ENCODE measurements at regions of chr4 and their contacts with region 1.

Region 1: DNA sequence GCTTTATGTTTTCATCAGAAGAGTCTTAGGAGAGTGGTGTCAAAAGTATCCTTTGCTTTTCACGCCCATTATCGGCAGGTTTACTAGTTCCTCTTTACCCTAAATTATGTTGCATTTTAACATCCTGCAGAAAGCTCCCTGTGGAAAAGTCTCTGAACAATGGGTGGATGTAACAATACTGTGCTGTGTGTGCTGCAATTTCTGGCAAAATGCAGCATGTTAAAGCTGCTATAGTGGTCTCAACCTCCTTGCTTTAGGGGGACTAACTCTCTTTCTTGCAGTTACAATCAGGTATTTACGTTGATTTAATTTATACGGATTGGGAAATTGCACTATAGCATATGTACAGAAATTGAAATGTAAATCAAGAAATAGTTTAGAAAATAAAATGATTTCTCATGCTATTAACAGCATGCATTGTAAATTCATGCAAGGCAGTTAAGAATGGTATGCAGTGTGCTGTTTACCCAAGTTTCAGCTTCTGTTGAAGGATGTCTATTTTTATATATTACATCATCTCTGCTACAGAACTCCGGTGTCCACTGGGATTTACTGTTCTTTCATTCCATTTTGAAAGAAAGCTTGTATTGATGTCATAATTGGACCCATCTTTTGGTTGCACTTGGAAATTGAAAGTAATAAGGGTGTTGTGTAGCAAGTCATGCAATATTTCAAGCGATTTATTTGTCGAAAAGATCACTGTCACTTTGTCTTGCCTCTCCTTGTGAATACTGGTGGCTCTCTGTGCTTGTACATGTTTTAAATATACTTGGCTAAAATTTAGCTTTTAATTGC is 145.7 kb downstream of the RAPGEF2 start:
- DNase-seq: peak; percentile 47
- ATAC-seq: peak; percentile 56; the same call in 1 of the 3 replicates
- H3K4me3 ChIP-seq: no peak overlapping the region
- H3K27ac ChIP-seq: no peak overlapping the region
- H3K4me1 ChIP-seq: peaks cover 10% of the 10 kb centered on the region
- H3K27me3 ChIP-seq: no peaks in the 10 kb centered on the region
- CTCF ChIP-seq: no peak
- EP300 ChIP-seq: no peak
- POLR2A ChIP-seq: no peak
- RAD21 ChIP-seq: no peak

Region 2: DNA sequence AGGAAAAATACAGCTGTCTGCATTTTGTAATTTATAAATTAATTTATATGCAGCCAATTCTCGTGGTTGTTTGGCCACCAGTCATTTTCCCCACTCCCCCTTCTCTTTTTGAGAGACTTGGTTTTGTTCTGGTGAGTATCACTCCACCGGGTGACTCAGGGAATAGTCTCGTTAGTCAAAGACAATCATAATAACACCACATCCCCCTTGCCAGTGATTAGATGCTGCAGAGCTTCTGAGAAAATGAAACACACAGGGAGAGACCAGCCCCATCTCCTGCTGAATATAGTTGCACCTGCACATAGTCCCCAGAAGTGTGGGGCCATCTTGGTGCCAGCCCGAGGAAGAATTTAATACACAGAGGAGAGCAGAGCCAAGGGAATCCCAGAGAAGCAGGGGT is 487.7 kb before region 1 on chr4:
- CTCF ChIA-PET with region 1: no interaction called
- POLR2A ChIA-PET with region 1: no interaction called
- in situ Hi-C with region 1: no loop called
- intact Hi-C with region 1: no loop called
- DNase-seq: no peak
- ATAC-seq: no peak
- H3K4me3 ChIP-seq: no peak overlapping the region
- H3K27ac ChIP-seq: no peak overlapping the region
- H3K4me1 ChIP-seq: peaks cover 32% of the 10 kb centered on the region
- H3K27me3 ChIP-seq: no peaks in the 10 kb centered on the region
- CTCF ChIP-seq: no peak
- EP300 ChIP-seq: no peak
- POLR2A ChIP-seq: no peak
- RAD21 ChIP-seq: no peak

Region 3: GRCh38 chr4:159312236-159312635 is 63.7 kb after region 1 on chr4:
- CTCF ChIA-PET with region 1: no interaction called
- POLR2A ChIA-PET with region 1: no interaction called
- in situ Hi-C with region 1: no loop called
- intact Hi-C with region 1: loop called (anchors 5 kb)
- DNase-seq: no peak
- ATAC-seq: no peak
- H3K4me3 ChIP-seq: no peak overlapping the region
- H3K27ac ChIP-seq: no peak overlapping the region
- H3K4me1 ChIP-seq: no peaks in the 10 kb centered on the region
- H3K27me3 ChIP-seq: no peaks in the 10 kb centered on the region
- CTCF ChIP-seq: no peak
- EP300 ChIP-seq: no peak
- POLR2A ChIP-seq: no peak
- RAD21 ChIP-seq: no peak

Measured in HepG2 (cell line).